Activated CD4-positive, alpha-beta T cell treated with anti-CD3 and anti-CD28 coated beads, Interleukin-2, amount 10 ng/mL, durations not matched to agents 24 days and 14 days (primary cell): ENCODE measurements at regions of chr19 and their contacts with region 1.

Region 1: DNA sequence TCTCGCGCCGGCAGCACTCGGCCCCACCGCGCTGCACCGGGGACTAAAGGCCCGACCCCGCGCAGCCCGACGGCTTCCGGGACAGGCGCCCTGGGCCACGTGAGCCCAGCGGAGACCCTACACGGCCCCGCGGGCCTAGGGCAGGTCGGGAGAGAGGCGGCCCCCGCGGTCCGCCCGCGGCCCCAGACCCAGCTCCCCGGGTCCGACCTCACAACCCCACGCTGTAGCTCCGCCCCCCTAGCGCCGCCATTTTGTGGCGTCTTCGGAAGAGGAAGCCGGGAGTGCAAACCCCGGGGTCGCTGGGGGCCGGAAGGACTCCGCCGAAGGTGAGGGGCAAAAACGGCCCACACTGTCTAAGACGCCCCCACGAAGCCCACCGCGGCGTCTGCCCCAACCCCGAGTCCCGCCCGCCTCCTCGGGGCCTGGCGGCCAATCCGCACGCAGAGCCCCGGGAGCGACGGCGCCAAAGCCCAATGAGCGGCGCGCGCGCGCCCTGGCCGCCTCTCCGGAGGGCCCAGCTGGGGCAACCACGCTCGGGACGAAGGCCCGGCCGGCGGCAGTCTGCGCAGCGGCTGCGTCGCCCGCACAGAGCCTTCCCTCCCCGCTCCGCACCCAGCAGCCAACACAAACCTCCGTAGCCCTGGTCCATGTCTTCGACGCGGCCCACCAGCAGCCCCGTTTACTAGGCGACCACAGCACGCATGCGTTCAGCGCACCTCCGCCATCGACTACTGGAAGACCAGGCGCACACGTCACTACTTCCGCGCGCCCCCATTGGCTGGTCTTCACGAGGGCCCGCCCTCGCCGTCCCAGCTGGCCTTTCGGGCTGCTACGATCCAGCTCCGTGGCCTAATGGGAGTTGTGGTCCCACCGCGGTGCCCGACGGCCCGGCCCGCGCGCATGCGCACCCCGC is at the start of gene AKAP8:
- DNase-seq: peak; percentile 99
- H3K4me3 Mint-ChIP-seq: peak within 1 kb of the TSS; percentile 86
- H3K27ac Mint-ChIP-seq: peak within 1 kb of the TSS; percentile 100
- H3K4me1 Mint-ChIP-seq: peaks cover 33% of the 10 kb centered on the region
- H3K27me3 Mint-ChIP-seq: peaks cover 2% of the 10 kb centered on the region
- total RNA-seq, gene AKAP8: 55.4 and 56.2 TPM in 2 replicates

Region 2: DNA sequence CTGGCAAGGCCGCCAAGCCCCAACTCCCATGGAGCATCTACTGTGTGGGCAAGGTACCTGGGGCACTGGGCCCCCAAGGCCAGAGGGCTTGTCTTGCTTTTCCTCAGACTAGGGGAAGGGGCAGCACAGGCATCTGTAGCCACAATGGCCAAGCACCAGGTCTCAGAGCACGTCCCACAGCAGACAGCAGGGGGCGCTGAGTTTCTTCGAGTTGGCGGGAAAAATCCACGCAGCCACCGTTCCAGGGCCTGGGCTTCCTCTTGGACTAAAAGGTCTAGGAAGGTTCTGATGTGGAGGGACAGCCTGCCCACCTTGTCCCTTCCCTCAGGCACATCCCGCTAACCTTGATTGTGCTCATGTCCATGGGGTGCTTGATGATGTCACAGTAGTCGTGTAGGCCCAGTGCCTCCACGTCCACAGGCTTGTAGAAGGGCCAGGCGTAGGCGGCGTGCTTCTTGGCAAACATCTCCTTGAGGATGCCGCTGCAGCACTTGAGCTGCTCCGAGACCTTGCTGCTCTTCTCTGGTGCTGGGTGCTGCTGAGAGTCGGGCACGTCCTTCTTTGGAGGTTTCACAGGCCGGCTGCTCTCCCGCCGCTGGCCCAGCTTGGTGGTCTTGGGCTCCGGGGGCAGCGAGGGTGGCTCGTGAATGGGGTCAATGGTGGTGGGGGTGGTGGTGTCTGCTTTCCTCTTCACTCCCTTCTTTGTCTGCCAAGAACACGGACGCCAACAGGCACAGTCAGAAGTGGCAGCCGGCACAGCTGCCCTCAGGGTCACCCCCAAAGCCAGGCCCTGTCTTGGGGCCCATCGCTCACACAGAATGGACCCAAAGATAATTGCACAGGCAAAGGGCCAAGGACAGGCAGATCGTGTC is 115.0 kb before region 1 on chr19:
- intact Hi-C with region 1: loop called (anchors 2 kb)
- DNase-seq: peak; percentile 92
- H3K4me3 Mint-ChIP-seq: no peak overlapping the region
- H3K27ac Mint-ChIP-seq: no peak overlapping the region
- H3K4me1 Mint-ChIP-seq: peaks cover 2% of the 10 kb centered on the region
- H3K27me3 Mint-ChIP-seq: no peaks in the 10 kb centered on the region

Region 3: DNA sequence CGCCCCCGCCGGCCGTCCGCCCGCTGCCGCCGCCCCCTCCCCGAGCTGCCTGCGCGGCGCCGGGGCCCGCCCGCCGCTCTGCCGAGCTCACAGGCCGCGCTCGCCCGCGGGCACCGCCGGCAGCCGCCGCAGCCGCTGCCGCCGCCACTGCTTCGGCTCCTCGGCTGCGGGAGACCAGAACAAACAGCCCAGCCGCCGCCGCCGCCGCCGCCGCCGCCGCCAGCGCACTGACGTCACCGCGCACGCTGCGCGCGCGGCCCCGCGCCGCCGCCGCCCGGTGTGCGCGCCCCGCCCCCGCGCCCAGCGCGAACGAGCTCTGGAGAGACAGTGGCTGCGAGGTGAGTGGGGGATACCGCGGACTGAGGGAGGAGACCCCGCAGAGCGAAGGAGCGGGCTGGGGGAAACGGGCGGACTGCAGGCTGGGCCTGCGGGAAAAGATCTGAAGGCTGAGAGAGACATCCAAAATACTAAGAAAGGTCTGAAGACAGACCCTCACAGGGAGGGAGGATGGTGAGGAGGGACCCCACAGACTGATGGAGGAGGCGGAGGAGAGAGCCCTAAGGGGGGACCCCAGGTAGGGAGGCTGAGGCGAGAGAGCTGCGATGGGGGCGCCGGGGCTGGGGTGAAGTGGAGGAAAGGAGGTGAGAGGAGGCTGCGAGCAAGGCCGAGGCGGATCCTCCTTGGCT is 46.9 kb before region 1 on chr19 and contains the start of gene BRD4:
- intact Hi-C with region 1: loop called (anchors 5 kb)
- DNase-seq: peak; percentile 95
- H3K4me3 Mint-ChIP-seq: peak within 1 kb of the TSS; percentile 96
- H3K27ac Mint-ChIP-seq: peak within 1 kb of the TSS; percentile 96
- H3K4me1 Mint-ChIP-seq: peaks cover 29% of the 10 kb centered on the region
- H3K27me3 Mint-ChIP-seq: no peaks in the 10 kb centered on the region
- total RNA-seq, gene BRD4: 109 TPM in 2 replicates

Region 4: GRCh38 chr19:15432629-15433518 is 53.5 kb after region 1 on chr19:
- intact Hi-C with region 1: loop called (anchors 1 kb)
- DNase-seq: peak; percentile 99
- H3K4me3 Mint-ChIP-seq: peak overlapping the region; percentile 97
- H3K27ac Mint-ChIP-seq: peak overlapping the region; percentile 97
- H3K4me1 Mint-ChIP-seq: peaks cover 28% of the 10 kb centered on the region
- H3K27me3 Mint-ChIP-seq: peaks cover 2% of the 10 kb centered on the region